Left cardiac atrium (tissue), 4 donors: ENCODE measurements at regions of chr6 and their contacts with region 1.

Region 1: DNA sequence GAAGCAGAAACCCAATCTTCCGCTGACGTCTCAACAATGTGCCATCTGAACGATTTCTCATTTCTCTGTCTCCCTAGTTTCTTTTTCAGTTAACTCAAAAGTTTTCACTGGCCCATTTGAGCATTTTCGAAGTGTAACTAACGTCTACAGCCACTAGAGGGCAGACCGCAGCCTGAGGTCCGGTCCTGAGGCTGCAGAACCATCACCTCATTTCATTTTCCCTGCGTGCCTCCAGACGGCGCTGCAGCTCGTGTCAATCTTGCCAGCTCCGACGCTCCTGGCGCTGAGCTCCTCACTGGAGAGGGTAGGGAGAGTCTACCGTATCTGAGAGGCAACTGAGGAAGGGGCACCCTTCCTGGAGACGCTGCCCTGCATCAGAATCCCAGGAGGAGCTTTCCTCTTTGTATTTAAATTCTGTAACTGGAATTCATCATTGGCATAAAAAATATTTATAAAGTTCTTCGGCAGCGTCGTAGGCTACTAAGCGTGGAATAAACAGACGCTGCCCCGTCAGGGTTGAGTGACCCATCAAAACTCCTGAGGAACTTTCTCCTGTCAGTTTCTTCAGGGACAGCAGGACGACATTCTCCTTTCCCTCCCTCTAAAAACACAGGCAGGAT is 28.5 kb upstream of the DTNBP1 start:
- DNase-seq: peak; percentile 85
- ATAC-seq: peak; percentile 97 to 98

Region 2: DNA sequence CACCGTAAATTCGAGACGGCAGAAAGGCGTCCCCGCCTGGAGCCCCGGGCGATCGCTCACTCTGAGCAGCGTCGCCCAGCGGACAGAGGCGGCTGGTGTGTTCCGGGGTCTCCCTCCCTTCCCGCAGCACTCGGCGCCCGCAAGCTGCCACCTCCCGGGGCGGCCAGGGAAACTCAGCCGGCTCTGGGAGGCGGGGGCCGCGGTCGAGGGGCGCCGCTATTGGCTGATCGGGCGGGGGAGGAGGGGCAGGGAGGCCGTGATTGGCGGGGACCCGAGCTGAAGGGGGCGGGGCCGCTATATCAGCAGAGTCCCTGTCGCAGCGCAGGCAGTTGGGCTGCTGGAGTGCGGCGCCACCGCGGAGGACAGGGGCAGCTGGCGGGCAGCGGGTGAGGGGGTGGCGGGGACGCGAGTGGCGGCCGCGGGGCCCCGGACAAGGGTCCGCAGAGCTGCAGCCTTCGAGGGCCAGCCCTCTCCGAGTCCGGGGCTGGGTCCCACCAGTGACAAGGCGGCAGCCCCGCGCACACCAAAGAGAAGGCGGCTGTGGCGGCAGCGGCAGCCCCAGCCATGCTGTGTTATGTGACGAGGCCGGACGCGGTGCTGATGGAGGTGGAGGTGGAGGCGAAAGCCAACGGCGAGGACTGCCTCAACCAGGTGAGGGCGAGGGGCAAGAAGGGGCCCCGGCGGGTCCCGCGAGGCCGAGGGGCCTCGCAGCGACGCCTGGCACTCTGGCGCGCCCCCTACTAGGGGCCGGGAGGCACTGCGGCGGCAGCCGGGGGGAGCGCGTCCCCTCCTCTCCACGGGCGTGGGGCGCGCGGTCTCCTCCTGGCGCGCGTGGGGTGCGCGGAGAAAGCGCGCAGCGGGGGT is 437.6 kb after region 1 on chr6 and contains the start of gene MYLIP:
- intact Hi-C with region 1: loop called (anchors 2 to 10 kb)
- DNase-seq: peak; percentile 98
- ATAC-seq: peak; percentile 97 to 98
- total RNA-seq, gene MYLIP: 11.3 to 24.0 TPM

Region 3: DNA sequence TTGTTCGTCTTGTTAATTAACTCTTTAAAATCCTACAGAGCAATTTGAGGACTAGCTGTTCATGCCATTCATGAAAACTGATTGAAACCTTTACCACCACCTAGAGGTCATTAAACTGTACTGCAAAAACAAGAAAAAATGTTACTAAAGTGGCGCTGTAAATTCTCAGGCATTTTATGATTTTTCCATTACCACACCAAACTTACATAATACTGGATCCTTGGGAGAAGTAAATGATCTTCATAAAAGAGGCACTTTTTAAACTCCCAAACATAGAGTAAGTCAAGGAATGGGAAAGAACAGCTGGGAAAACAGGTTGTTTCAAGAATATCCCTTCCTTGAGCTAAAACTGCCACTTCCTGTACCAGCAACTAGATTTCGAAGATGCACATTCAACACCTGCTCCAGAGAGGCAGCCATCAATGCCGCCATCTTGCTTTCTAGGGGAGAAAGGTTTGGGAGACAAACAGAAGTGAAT is 491.9 kb after region 1 on chr6:
- intact Hi-C with region 1: loop called (anchors 1 to 2 kb)
- DNase-seq: no peak
- ATAC-seq: peak; percentile 51 to 53

Region 4: GRCh38 chr6:16206595-16207037 is 515.3 kb after region 1 on chr6:
- intact Hi-C with region 1: loop called in 1 of 2 experiments (anchors 2 kb)
- DNase-seq: no peak
- ATAC-seq: peak; percentile 77 to 90